GM10248 (cell line): ENCODE measurements at regions of chr13 and their contacts with region 1.

Region 1: GRCh38 chr13:98842864-98843481 is 90.5 kb upstream of the SLC15A1 start:
- DNase-seq: peak; percentile 65
- CTCF ChIP-seq: peak; percentile 89

Region 2: DNA sequence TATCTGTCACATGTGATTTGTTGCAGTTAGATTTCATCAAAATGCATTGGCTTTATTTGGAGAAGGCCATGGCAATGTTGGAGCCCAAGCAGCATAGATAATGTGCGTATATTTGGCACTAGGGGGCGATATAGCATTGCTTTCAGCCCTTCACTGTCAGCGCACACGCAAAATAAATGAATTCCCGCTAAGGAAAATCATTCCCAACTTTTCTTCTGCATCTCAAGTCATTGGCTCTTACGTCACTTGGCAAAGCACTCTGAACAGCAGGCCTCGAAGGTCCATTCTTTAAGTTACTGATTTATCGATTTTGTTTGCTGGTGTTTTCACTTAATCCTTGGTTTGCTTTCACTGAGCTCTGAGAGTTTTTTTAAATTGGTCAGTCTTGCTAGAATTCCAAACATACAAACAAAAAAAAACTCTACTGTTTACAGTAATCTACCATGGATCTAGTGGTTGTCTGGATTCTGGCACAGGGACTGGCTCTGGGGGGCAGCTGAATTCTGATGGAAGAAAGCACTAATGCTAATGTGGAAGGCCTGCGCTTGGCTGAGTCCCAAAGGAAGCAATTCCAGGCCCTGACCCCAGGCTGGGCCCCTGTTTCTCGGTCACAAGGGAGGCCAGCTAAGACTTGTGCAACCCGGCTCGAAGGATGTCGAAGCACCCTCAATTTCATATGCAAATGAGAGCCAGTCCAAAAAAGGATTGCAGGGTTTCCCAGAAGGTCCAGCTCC is 987.2 kb before region 1 on chr13:
- CTCF ChIA-PET with region 1: interaction called, 18 read pairs
- POLR2A ChIA-PET with region 1: no interaction called
- DNase-seq: peak; percentile 37
- CTCF ChIP-seq: peak; percentile 75

Region 3: DNA sequence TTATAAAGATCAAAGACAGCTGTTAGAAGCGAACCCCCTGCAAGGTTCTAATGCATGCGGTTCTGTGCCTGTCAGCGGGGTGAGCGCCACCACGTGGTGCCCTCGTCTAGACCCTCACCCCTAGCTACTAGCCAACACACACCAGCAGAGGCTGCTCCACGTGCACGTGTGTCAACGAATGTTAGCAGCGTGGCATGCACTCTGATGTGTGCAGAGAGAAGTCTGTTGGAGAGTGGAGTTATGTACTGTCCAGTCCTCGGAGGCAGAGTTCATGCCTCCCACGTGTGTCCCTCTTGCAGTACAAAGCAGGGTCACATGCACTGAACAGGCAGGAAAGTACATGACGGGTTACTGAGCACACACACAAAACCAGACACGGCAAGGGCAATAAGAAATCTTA is 15.5 kb before region 1 on chr13:
- CTCF ChIA-PET with region 1: interaction called, 16 read pairs
- POLR2A ChIA-PET with region 1: no interaction called
- DNase-seq: no peak
- CTCF ChIP-seq: no peak

Region 4: DNA sequence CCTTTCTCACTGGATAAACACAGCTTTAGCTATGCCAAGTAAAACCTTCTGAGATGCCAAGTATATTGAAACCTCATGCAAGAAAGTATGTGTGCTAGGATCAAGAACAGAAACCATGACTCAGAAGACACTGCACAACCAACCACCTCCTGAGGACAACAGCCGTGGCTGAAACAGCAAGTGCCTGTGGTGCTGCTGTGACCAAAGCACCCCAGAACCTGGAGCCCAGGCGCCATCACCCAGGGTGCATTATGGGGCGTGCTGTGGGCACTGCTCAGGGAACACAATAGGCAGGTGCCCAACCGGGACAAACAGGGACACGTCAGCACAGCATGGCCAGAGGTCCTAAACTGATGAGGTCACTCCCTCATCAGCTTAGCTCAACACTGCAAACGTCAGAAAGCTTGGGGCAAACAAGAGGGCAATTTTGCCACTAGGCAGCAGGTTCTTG is 10.8 kb after region 1 on chr13:
- CTCF ChIA-PET with region 1: interaction called, 17 read pairs
- POLR2A ChIA-PET with region 1: no interaction called
- DNase-seq: peak; percentile 56
- CTCF ChIP-seq: no peak

Region 5: GRCh38 chr13:98875146-98875729 is 32.3 kb after region 1 on chr13:
- CTCF ChIA-PET with region 1: interaction called, 10 read pairs
- POLR2A ChIA-PET with region 1: no interaction called
- DNase-seq: peak; percentile 35
- CTCF ChIP-seq: no peak

Region 6: GRCh38 chr13:99288089-99288488 is 445.1 kb after region 1 on chr13:
- CTCF ChIA-PET with region 1: no interaction called
- POLR2A ChIA-PET with region 1: no interaction called
- DNase-seq: peak; percentile 66
- CTCF ChIP-seq: no peak